HAP-1 (cell line): ENCODE measurements at regions of chr14 and their contacts with region 1.

Region 1: DNA sequence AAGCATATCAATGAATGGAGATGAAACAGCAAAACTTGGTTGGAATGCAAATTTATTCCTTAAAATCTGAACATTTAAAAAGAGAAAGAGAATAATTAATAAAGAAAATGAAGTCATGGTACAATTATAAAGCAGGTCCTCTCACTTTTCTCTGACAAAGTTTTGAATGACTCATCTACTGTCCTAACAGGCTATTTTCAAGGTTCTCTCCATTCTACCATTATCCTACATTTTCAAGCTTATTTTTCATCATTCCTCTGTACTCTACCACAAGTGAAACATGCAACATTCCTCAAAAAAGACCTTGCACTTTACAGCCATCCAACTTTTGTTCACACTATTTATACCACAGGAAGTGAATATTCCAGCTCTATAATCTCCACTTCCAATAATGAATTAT is 36.9 kb upstream of the AP4S1 start:
- DNase-seq: no peak
- H3K4me3 ChIP-seq: no peak overlapping the region
- H3K4me1 ChIP-seq: peaks cover 7% of the 10 kb centered on the region
- H3K27me3 ChIP-seq: no peaks in the 10 kb centered on the region

Region 2: DNA sequence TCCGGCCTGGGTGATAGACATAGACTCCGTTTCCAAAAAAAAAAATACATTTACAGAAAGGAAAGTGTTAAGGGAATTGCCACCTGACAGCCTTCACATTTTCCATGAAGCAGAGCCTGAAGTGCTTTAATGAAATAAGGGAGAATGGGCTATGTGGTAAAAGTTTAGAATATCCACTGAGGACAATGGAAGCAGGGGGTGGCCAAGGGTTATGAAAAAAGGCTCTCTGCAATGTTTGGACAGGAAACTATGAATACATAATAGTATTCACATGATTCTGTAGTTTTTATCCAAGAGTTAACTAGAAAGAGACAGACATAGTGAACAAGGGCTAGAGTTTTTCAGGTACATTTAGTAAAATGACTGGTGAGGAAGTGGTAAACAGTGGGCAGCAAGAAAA is 38.9 kb before region 1 on chr14:
- in situ Hi-C with region 1: no loop called
- DNase-seq: no peak
- H3K4me3 ChIP-seq: no peak overlapping the region
- H3K4me1 ChIP-seq: peaks cover 8% of the 10 kb centered on the region
- H3K27me3 ChIP-seq: no peaks in the 10 kb centered on the region

Region 3: DNA sequence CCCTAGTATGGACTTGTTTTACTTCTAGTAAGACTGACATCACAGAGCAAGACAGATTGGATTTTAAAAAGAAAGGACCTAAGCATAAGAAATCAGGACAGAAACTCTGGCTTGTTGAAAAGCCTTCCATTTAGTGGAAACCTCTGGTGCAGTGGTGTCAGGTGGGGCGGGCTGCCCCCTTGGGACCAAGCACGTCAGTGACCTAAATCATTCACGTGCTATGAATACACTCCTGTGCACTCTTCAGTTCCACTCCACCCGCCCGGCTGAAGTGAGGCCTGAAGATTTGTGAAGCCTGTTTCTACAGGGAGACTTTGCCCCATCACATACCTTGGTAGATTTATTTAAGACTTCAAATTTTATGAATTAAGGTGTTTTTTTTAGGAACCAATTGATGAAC is 95.9 kb after region 1 on chr14:
- in situ Hi-C with region 1: loop called (anchors 10 kb)
- DNase-seq: peak in 1 of 2 experiments; percentile 18
- H3K4me3 ChIP-seq: no peak overlapping the region
- H3K4me1 ChIP-seq: no peaks in the 10 kb centered on the region; the same call in 1 of the 2 replicates
- H3K27me3 ChIP-seq: no peaks in the 10 kb centered on the region

Region 4: DNA sequence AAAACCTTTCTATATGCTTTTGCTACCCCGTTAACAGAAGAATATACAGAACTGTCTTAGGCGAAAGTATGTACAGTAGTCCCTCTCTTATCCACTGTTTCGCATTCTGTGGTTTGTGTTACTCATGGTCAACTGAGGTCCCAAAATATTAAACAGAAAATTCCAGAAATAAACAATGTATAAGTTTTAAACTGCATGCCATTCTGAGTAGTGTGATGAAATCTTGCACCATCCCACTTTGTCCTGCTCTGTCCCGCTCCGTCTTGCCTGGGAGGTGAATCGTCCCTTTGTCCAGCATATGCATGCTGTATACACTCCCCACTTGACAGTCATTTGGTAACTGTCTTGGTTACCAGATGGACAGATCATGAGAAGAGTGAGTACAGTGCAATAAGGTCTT is 107.7 kb after region 1 on chr14:
- in situ Hi-C with region 1: no loop called
- DNase-seq: no peak
- H3K4me3 ChIP-seq: no peak overlapping the region
- H3K4me1 ChIP-seq: peaks cover 5% of the 10 kb centered on the region
- H3K27me3 ChIP-seq: no peaks in the 10 kb centered on the region

Region 5: GRCh38 chr14:31300296-31300695 is 311.8 kb after region 1 on chr14:
- in situ Hi-C with region 1: no loop called
- DNase-seq: no peak
- H3K4me3 ChIP-seq: no peak overlapping the region
- H3K4me1 ChIP-seq: no peaks in the 10 kb centered on the region; the same call in 1 of the 2 replicates
- H3K27me3 ChIP-seq: no peaks in the 10 kb centered on the region